Caco-2 (cell line): ENCODE measurements at regions of chr1 and their contacts with region 1.

Region 1: DNA sequence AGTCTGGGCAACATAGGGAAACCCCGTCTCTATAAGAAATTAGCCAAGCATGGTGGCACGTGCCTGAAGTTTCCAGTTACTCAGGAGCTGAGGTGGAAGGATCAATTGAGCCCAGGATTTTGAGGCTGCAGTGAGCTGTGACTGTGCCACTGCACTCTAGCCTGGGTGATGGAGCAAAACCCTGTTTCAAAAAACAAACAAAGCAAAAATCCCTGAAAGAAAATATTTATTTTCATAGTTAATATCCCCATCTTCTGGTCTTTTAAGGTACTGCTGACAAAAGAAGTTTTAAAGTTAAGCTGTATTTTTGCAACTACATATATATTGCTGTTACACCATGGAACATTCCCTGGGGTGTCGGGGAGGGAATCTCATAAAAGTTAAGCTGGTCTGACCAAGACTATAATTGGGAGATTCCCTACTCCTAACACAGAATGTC is 26.0 kb downstream of the VAMP4 start:
- DNase-seq: peak in 1 of 2 experiments; percentile 8
- H3K4me3 ChIP-seq: no peak overlapping the region
- H3K4me3 Mint-ChIP-seq: no peak overlapping the region
- H3K27ac Mint-ChIP-seq: no peak overlapping the region
- H3K4me1 ChIP-seq: no peaks in the 10 kb centered on the region
- H3K4me1 Mint-ChIP-seq: no peaks in the 10 kb centered on the region
- H3K27me3 ChIP-seq: no peaks in the 10 kb centered on the region
- H3K27me3 Mint-ChIP-seq: no peaks in the 10 kb centered on the region
- CTCF ChIP-seq: peak; percentile 13 to 53

Region 2: DNA sequence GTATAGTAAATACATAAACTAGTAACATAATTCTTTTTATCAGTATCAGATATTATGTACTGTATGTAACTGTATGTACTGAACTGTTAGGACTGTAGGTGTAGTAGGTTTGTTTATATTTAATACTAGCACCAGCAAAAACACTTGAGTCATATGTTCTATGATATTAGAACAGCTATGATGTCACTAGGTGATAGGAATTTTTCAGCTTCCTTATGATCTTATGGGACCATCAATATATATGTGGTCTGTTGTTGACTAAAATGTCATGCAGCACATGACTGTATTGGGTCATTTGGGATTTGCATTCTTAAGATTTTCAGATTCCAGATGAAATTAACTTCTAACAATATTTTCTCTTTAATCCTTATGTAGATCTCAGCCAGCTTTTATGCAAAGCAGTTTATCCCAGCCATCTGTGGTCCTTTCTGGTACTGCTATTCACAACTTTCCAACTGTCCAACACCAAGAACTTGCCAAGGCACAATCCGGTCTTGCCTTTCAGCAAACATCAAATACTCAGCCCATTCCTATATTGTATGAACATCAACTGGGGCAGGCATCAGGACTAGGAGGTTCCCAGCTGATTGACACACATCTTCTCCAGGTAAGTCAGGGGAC is 132.1 kb before region 1 on chr1:
- CTCF ChIA-PET with region 1: no interaction called
- POLR2A ChIA-PET with region 1: no interaction called
- intact Hi-C with region 1: loop called (anchors 10 kb)
- DNase-seq: no peak
- H3K4me3 ChIP-seq: no peak overlapping the region
- H3K4me3 Mint-ChIP-seq: no peak overlapping the region
- H3K27ac Mint-ChIP-seq: no peak overlapping the region
- H3K4me1 ChIP-seq: no peaks in the 10 kb centered on the region
- H3K4me1 Mint-ChIP-seq: no peaks in the 10 kb centered on the region
- H3K27me3 ChIP-seq: no peaks in the 10 kb centered on the region
- H3K27me3 Mint-ChIP-seq: no peaks in the 10 kb centered on the region
- CTCF ChIP-seq: no peak